Activated CD4-positive, alpha-beta T cell treated with anti-CD3 and anti-CD28 coated beads for 36 hours (primary cell): ENCODE measurements at regions of chr10 and their contacts with region 1.

Region 1: DNA sequence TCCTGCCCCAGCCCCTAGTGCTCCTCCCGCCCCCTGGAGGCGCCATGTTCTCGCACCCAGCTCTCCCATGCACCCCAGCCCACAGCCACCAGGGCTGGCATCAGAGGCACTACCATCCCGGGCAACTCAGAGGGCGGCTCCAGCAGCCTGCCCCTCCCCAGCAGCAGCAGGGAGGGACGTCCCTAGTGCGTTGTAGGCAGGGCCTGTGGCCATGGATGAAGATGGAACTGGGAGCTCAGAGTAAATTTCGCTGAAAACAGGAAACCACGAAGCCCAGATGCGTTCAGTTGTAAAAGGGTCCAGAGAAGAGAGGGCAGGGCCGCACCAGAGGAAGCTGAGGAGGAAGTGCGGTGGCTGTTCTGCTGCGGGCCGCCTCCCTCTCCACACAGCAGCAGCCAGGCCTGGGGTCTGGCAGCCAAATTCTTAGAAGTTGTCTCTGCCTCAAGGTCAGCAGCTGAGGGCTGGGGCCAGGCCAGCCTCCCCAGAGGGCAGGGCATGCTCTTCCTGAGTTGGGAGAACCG is 24.6 kb downstream of the VSIR start:
- DNase-seq: peak; percentile 90
- ATAC-seq: peak; percentile 91
- H3K4me3 Mint-ChIP-seq: peak overlapping the region; percentile 68
- H3K27ac Mint-ChIP-seq: peak overlapping the region; percentile 99
- H3K4me1 Mint-ChIP-seq: peaks cover 97% of the 10 kb centered on the region
- H3K27me3 Mint-ChIP-seq: no peaks in the 10 kb centered on the region

Region 2: DNA sequence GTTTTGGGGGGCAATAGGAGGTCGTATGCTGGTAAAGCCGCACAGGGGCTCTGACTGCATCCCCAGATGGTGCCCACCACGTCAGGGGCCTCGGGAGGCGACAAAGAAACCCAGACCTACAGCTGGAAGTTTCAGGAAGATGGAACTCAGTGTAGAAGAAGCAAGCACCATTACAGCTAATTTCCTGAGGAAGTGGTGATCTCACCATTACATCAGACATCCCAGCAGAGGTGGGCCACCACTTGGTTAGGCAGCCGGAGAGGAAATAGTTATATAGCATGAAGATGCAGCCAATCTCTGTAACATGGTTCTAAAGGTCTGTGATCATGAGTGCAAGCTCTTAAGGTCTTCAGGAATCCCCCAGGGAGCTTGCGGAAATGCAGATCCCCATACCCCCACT is 733.1 kb before region 1 on chr10:
- CTCF ChIA-PET with region 1: no interaction called
- POLR2A ChIA-PET with region 1: no interaction called
- intact Hi-C with region 1: no loop called
- DNase-seq: no peak
- ATAC-seq: no peak
- H3K4me3 Mint-ChIP-seq: no peak overlapping the region
- H3K27ac Mint-ChIP-seq: no peak overlapping the region
- H3K4me1 Mint-ChIP-seq: no peaks in the 10 kb centered on the region
- H3K27me3 Mint-ChIP-seq: peaks cover 5% of the 10 kb centered on the region

Region 3: DNA sequence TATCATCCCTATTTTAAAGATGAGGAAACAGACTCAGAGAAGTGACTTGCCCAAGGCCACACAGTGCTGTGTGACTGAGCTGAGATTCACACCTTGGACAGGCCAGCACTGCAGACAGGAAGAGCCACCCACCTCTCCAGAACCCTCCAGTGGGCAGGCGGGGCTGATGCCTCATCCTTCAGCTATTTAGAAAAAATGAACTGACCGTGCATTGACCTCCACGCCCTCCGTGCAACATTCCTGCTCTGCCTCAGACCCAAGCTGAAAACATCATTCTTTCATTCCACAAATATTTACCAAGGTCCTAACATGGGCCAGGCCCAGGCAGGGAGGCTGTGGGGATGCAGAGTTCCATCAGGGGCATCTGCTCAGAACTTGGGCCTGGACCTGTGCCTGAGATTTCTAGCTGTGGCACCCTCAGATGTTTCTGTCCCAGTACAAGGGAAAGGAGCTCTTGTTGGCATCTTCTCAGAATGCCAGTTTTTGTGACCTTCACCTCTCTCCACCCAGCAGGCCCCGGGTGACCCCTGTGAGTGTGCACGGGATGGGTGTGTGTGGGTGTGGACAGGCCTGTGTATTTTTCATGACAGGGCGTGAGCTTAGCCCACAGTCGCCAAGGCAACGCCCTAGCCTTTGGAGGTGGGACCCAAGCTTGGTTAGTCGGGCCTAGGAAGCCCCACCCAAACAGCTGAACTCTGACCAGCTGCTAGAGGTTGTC is 18.1 kb after region 1 on chr10:
- CTCF ChIA-PET with region 1: interaction called, 11 read pairs
- POLR2A ChIA-PET with region 1: interaction called, 8 read pairs
- intact Hi-C with region 1: loop called in 1 of 2 experiments (anchors 2 kb)
- DNase-seq: no peak
- ATAC-seq: no peak
- H3K4me3 Mint-ChIP-seq: no peak overlapping the region
- H3K27ac Mint-ChIP-seq: peak overlapping the region; percentile 92
- H3K4me1 Mint-ChIP-seq: peaks cover 84% of the 10 kb centered on the region
- H3K27me3 Mint-ChIP-seq: no peaks in the 10 kb centered on the region